CD8-positive, alpha-beta memory T cell (primary cell): ENCODE measurements at regions of chr9 and their contacts with region 1.

Region 1: DNA sequence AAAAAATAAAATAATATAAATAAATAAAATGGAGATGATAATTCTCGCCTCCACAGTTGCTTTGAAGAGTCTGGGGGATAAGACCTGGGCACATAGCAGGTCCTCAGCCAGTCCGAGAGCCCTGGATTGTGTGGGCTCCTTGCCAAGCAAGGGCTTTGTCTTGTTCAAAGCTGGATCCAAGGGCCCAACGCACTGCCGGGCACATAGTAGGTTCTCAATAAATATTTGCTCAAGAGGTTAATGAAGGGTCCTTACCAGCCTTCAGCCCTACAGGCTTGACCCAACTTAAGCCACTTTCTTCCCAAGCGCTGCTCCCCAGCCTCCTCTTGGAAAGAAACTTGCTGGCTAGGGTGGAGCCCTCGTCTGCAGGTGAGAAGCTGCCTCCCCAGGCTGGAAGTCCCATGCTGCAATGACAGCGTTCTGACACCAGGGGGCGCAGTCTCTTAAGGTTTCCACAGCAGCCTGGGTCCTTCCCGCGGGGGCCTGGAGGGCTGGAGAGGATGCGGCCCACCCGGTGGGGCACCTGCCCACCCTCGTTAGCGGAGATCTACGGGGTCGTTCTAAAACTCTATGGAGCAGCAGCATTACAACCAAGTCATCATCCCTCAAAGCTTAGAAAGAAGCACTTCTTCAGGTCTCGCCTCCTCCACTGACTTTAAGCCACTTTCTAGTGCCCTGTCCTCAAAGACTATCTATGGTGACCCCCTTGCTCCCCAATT is 115.2 kb downstream of the LHX2 start:
- DNase-seq: peak; percentile 35 to 81 (median 66)
- H3K4me3 ChIP-seq: no peak overlapping the region
- H3K4me3 Mint-ChIP-seq: no peak overlapping the region
- H3K27ac ChIP-seq: no peak overlapping the region
- H3K27ac Mint-ChIP-seq: no peak overlapping the region
- H3K4me1 ChIP-seq: peaks cover 4% of the 10 kb centered on the region
- H3K4me1 Mint-ChIP-seq: peaks cover 3 to 8% (median 5%) of the 10 kb centered on the region in 3 donors
- H3K27me3 ChIP-seq: no peaks in the 10 kb centered on the region
- H3K27me3 Mint-ChIP-seq: peaks cover 4 to 8% of the 10 kb centered on the region in 2 donors

Region 2: DNA sequence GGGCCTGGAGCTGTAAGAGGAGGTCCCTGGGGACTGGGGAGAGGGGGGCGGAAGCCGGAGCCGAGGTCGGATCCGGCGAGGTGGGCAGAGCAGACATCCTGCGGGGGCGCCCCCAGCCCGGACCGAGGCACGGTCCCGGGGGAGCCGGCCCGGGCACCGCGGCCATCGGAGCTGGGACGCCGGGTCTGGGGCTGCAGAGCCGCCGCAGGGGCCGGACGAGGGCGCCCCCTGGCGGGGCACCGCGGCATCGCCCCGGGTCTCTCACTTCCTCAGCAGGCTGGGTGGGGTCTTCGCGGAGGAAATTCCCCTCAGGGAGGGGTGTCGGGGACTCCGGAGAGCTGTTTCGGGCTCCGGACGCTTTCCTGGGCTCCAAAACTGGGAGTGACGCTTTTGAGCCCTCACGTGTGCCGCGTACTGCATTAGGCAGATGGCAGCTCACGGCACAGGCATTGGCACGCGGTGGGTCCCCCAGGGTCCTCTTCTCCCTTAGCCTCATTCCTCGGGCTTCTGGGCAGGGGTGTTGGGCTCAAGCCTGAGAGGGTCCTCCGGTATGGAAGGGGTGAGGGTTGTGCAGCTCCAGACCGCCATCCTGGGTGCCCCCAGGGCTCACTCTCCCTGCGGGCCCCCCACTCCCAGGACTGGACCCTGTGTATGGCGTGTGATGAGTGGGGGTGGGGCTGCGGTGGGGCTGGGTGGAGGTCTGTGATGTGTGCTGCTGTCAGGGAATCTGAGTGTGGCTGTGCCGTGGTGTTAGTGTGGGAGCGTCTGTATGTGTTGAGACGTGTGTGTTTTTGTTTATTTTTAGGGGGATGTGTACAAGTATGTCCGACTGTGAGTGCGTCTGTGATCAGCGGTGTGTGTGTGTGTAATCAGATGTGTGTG is 85.6 kb before region 1 on chr9:
- CTCF ChIA-PET with region 1: no interaction called
- POLR2A ChIA-PET with region 1: no interaction called
- DNase-seq: peak in 4 of 5 donors; percentile 22 to 29 (median 23)
- H3K4me3 ChIP-seq: no peak overlapping the region
- H3K4me3 Mint-ChIP-seq: peak overlapping the region in 6 of 7 donors; percentile 43 to 70 (median 54)
- H3K27ac ChIP-seq: no peak overlapping the region
- H3K27ac Mint-ChIP-seq: no peak overlapping the region
- H3K4me1 ChIP-seq: no peaks in the 10 kb centered on the region
- H3K4me1 Mint-ChIP-seq: peaks cover 8 to 14% (median 9%) of the 10 kb centered on the region in 3 donors
- H3K27me3 ChIP-seq: peaks cover 25% of the 10 kb centered on the region
- H3K27me3 Mint-ChIP-seq: peaks cover 44 to 75% of the 10 kb centered on the region in 2 donors

Region 3: GRCh38 chr9:124164811-124165210 is 38.1 kb after region 1 on chr9:
- CTCF ChIA-PET with region 1: no interaction called
- POLR2A ChIA-PET with region 1: no interaction called
- DNase-seq: no peak
- H3K4me3 ChIP-seq: no peak overlapping the region
- H3K4me3 Mint-ChIP-seq: no peak overlapping the region
- H3K27ac ChIP-seq: no peak overlapping the region
- H3K27ac Mint-ChIP-seq: peak overlapping the region in 1 of 8 donors; percentile 31
- H3K4me1 ChIP-seq: no peaks in the 10 kb centered on the region
- H3K4me1 Mint-ChIP-seq: no peaks in the 10 kb centered on the region
- H3K27me3 ChIP-seq: no peaks in the 10 kb centered on the region
- H3K27me3 Mint-ChIP-seq: peaks cover 9 to 16% of the 10 kb centered on the region in 2 donors

Region 4: GRCh38 chr9:124394596-124394995 is 267.9 kb after region 1 on chr9:
- CTCF ChIA-PET with region 1: interaction called, 10 read pairs
- POLR2A ChIA-PET with region 1: no interaction called
- DNase-seq: no peak
- H3K4me3 ChIP-seq: no peak overlapping the region
- H3K4me3 Mint-ChIP-seq: no peak overlapping the region
- H3K27ac ChIP-seq: no peak overlapping the region
- H3K27ac Mint-ChIP-seq: peak overlapping the region in 3 of 8 donors; percentile 6 to 43 (median 24)
- H3K4me1 ChIP-seq: peaks cover 9% of the 10 kb centered on the region
- H3K4me1 Mint-ChIP-seq: peaks cover 40 to 76% (median 59%) of the 10 kb centered on the region in 3 donors
- H3K27me3 ChIP-seq: no peaks in the 10 kb centered on the region
- H3K27me3 Mint-ChIP-seq: no peaks in the 10 kb centered on the region